IMR-90 (cell line): ENCODE measurements at regions of chr16 and their contacts with region 1.

Region 1: DNA sequence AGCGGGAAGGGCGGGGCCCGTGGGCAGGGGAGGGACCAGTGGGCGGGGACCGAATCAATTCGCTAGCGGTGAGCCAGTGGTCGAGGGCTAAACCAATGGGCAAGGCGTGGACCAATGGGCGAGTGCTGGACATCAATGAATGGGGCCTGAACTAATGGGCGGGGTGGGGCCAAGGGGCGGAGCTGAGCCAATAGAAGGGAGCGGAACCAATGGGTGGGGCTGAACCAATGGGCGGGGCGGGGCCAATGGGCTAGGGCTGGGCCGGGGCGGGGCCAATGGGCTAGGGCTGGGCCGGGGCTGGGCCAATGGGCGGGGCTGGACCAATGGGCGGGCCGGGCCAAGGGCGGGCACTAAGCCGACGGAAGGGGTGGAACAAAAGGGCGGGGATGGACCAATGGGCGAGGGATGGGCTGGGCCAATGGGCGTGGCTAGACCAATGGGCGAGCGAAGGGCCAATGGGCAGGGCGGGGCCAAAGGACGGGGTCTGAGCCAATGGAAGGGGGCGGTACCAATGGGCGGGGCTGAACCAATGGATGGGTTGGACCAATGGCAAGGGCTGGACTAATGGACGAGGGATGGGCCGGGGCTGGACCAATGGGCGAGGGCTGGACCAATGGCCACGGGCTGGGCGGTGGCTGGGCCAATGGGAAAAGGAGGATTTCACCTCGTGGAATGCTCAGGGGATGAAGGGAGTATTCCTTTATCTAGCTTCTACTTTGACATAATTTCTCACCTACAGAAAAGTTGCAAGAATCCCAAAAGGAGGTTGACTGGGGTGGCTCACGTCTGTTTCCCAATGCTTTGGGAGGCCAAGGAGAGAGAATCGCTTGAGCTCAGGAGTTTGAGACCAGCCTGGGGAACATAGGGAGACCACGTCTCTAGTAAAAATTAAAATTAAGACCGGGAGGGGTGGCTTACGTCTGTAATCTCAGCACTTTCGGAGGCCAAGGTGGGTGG is 6.0 kb upstream of the FLYWCH1 start:
- DNase-seq: peak; percentile 99
- ATAC-seq: peak; percentile 85
- H3K4me3 ChIP-seq: 0 out of 2 replicates have a peak overlapping the region, but pooled peaks have one; percentile 74
- H3K27ac ChIP-seq: no peak overlapping the region
- H3K4me1 ChIP-seq: peaks cover 3% of the 10 kb centered on the region
- H3K27me3 ChIP-seq: no peaks in the 10 kb centered on the region
- CTCF ChIP-seq: no peak
- POLR2A ChIP-seq: no peak
- RAD21 ChIP-seq: no peak

Region 2: DNA sequence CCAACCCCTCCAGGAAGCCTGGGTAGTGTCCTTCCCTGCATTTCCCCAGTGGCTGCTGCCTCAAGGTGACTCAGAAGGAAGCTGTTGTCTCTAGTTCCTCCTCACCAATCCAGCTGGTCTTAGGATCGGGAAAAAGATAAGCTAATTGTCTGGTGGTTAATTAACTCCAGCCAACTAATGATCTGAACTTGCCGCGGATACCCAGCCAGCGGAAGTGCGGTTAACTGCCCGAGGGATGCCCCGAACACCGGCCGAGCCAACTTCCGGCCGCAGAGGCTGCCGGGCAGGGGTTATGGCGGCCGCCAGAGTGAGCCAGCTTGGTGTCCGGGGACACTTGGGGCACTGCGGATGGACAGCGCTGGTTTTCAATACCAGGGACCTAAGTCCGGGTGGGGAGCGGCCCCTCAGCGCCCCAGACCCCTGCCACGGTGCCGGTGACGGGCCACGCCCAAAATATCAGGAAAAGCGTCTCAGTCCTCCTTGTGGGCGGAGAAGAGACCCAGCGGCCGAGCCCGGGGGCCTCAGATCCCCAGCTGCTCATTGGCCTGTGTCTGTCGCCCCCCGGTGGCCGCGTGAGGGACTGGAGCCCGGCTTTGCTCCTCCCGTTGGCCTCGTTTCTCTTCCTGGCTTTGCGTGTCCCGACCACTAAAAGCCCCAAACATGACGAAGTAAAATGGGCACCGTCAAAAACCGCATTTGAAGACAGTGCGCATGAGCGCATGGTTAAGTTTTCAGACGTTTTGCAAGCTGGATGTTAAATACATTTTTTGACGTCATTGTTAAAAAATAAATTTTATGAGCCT is 37.5 kb before region 1 on chr16:
- CTCF ChIA-PET with region 1: interaction called, 3 read pairs
- POLR2A ChIA-PET with region 1: interaction called, 3 read pairs
- dilution Hi-C with region 1: no loop called
- in situ Hi-C with region 1: no loop called
- intact Hi-C with region 1: loop called (anchors 1 kb)
- DNase-seq: peak; percentile 93
- ATAC-seq: peak; percentile 99
- H3K4me3 ChIP-seq: peak overlapping the region; percentile 67
- H3K27ac ChIP-seq: peak overlapping the region; percentile 94
- H3K4me1 ChIP-seq: peaks cover 3% of the 10 kb centered on the region
- H3K27me3 ChIP-seq: no peaks in the 10 kb centered on the region
- CTCF ChIP-seq: peak; percentile 99
- POLR2A ChIP-seq: peak; percentile 67
- RAD21 ChIP-seq: peak; percentile 97

Region 3: GRCh38 chr16:2874912-2875362 is 30.8 kb before region 1 on chr16:
- CTCF ChIA-PET with region 1: interaction called, 10 read pairs
- POLR2A ChIA-PET with region 1: no interaction called
- dilution Hi-C with region 1: no loop called
- in situ Hi-C with region 1: no loop called
- intact Hi-C with region 1: no loop called
- DNase-seq: peak; percentile 61
- ATAC-seq: peak; percentile 100
- H3K4me3 ChIP-seq: no peak overlapping the region
- H3K27ac ChIP-seq: no peak overlapping the region
- H3K4me1 ChIP-seq: no peaks in the 10 kb centered on the region
- H3K27me3 ChIP-seq: no peaks in the 10 kb centered on the region
- CTCF ChIP-seq: peak; percentile 97
- POLR2A ChIP-seq: no peak
- RAD21 ChIP-seq: peak; percentile 74

Region 4: GRCh38 chr16:2883027-2883851 is 22.5 kb before region 1 on chr16 and contains the start of gene FLYWCH2:
- CTCF ChIA-PET with region 1: interaction called, 5 read pairs
- POLR2A ChIA-PET with region 1: interaction called, 3 read pairs
- dilution Hi-C with region 1: no loop called
- in situ Hi-C with region 1: no loop called
- intact Hi-C with region 1: loop called (anchors 1 kb)
- DNase-seq: peak; percentile 93
- ATAC-seq: peak; percentile 84
- H3K4me3 ChIP-seq: peak within 1 kb of the TSS; percentile 49
- H3K27ac ChIP-seq: peak within 1 kb of the TSS; percentile 83
- H3K4me1 ChIP-seq: peaks cover 4% of the 10 kb centered on the region
- H3K27me3 ChIP-seq: no peaks in the 10 kb centered on the region
- CTCF ChIP-seq: no peak
- POLR2A ChIP-seq: peak; percentile 52
- RAD21 ChIP-seq: no peak
- total RNA-seq, gene FLYWCH2: 42.3 and 48.9 TPM in 2 replicates

Region 5: DNA sequence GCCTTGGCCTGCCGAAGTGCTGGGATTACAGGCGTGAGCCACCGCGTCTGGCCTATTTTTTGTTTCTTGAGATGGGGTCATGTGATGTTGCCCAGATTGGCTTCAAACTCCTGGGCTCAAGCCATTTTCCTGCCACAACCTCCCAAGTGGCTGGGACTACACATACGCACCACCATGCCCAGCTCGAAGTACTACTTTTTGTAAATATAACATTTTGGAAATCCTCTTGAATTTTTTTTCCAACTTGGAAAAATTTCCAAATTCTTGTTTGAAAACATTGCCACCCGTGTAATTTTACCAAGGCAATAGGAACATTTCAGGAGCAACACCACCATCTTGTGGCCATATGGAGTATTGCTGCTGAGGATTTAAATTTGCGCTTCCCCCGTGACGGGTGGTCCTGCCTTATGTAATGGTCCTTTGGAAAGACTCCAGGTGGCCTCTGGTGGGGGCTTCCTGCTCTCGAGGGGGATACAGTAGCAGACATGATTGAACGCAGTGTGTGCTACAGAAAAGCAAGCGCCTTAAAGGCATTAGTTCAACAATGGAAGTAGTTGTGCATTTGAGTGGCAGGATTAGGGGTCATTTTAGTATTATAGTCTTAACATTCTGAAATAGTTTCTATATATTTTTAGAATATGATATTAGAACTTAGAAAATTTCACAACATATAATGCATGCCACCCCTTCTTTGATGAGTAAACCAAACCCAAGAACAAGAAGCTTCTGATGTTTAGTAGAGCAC is 14.0 kb after region 1 on chr16:
- CTCF ChIA-PET with region 1: no interaction called
- POLR2A ChIA-PET with region 1: no interaction called
- dilution Hi-C with region 1: no loop called
- in situ Hi-C with region 1: no loop called
- intact Hi-C with region 1: loop called (anchors 2 kb)
- DNase-seq: peak; percentile 74
- ATAC-seq: peak; percentile 86
- H3K4me3 ChIP-seq: no peak overlapping the region
- H3K27ac ChIP-seq: no peak overlapping the region
- H3K4me1 ChIP-seq: peaks cover 5% of the 10 kb centered on the region
- H3K27me3 ChIP-seq: no peaks in the 10 kb centered on the region
- CTCF ChIP-seq: peak; percentile 91
- POLR2A ChIP-seq: no peak
- RAD21 ChIP-seq: peak; percentile 86

Region 6: DNA sequence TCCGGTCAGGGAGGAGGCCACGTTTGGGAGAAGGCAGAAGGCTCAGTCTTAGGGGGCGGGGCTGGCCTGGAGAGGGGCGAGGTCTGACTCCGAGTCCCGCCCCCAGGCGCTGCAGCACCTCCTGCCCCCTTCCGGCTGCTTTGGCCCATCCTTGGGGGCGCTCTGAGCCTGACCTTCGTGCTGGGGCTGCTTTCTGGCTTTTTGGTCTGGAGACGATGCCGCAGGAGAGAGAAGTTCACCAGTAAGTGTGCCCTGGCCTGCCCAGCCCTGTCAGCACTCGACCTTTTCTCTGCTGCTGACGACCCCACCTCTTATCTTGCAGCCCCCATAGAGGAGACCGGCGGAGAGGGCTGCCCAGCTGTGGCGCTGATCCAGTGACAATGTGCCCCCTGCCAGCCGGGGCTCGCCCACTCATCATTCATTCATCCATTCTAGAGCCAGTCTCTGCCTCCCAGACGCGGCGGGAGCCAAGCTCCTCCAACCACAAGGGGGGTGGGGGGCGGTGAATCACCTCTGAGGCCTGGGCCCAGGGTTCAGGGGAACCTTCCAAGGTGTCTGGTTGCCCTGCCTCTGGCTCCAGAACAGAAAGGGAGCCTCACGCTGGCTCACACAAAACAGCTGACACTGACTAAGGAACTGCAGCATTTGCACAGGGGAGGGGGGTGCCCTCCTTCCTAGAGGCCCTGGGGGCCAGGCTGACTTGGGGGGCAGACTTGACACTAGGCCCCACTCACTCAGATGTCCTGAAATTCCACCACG is 115.9 kb after region 1 on chr16:
- CTCF ChIA-PET with region 1: no interaction called
- POLR2A ChIA-PET with region 1: no interaction called
- dilution Hi-C with region 1: no loop called
- in situ Hi-C with region 1: no loop called
- intact Hi-C with region 1: no loop called
- DNase-seq: peak; percentile 94
- ATAC-seq: peak; percentile 46
- H3K4me3 ChIP-seq: peak overlapping the region; percentile 77
- H3K27ac ChIP-seq: peak overlapping the region; percentile 97
- H3K4me1 ChIP-seq: peaks cover 11% of the 10 kb centered on the region
- H3K27me3 ChIP-seq: no peaks in the 10 kb centered on the region; the same call in 1 of the 2 replicates
- CTCF ChIP-seq: peak; percentile 38
- POLR2A ChIP-seq: peak; percentile 34; the same call in 1 of the 2 replicates
- RAD21 ChIP-seq: no peak

Region 7: GRCh38 chr16:3045357-3045728 is 139.6 kb after region 1 on chr16:
- CTCF ChIA-PET with region 1: no interaction called
- POLR2A ChIA-PET with region 1: no interaction called
- dilution Hi-C with region 1: no loop called
- in situ Hi-C with region 1: no loop called
- intact Hi-C with region 1: no loop called
- DNase-seq: peak; percentile 21
- ATAC-seq: peak; percentile 73
- H3K4me3 ChIP-seq: peak overlapping the region; percentile 46
- H3K27ac ChIP-seq: no peak overlapping the region
- H3K4me1 ChIP-seq: no peaks in the 10 kb centered on the region; the same call in 1 of the 2 replicates
- H3K27me3 ChIP-seq: peaks cover 71% of the 10 kb centered on the region
- CTCF ChIP-seq: no peak
- POLR2A ChIP-seq: no peak
- RAD21 ChIP-seq: no peak